Left ventricle myocardium inferior (tissue), 1 donor: ENCODE measurements at regions of chr10 and their contacts with region 1.

Region 1: GRCh38 chr10:79038841-79039201 is 29.9 kb upstream of the ZMIZ1 start:
- DNase-seq: no peak
- H3K4me3 ChIP-seq: no peak overlapping the region
- H3K27ac ChIP-seq: no peak overlapping the region
- H3K4me1 ChIP-seq: no peaks in the 10 kb centered on the region
- H3K27me3 ChIP-seq: no peaks in the 10 kb centered on the region
- CTCF ChIP-seq: no peak

Region 2: DNA sequence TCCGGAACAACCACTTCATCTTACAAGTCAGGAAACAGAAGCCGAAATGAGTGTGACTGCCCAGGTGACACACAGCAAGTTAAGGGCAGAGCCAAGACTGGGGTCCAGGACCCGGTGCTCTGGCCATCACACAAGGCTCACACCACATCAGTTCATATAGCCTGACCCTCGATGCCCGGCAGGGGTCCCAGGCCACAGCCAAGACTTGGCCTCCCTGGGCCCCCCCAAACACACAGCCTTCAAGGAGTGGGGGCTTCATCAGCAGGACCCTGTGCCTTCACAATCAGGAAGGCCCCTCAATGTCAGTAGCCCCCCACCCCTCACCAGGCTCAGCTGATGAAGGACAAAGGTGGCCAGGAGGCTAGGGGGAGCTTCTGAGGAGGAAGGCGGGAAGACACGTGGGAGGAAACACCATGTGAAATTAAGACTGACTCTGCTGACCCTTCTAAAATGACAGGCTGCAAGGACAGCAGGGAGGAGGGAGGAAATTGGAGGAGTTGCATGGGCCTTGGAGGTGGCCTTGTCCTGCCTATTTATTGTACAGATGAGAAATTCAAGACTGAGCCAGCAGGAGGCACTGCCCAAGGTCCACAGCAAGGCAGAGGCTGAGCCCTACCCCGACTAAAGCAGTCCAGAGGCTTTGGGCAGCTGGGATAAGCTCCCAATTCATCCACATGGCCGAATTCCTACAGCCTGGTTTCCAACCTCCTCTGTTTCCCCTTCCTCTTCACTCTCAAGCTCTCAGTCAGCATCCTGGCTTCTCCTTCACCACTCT is 186.2 kb before region 1 on chr10:
- intact Hi-C with region 1: loop called (anchors 10 kb)
- DNase-seq: no peak
- H3K4me3 ChIP-seq: no peak overlapping the region
- H3K27ac ChIP-seq: no peak overlapping the region
- H3K4me1 ChIP-seq: peaks cover 16% of the 10 kb centered on the region
- H3K27me3 ChIP-seq: no peaks in the 10 kb centered on the region
- CTCF ChIP-seq: peak; percentile 49